Caco-2 (cell line): ENCODE measurements at regions of chr10 and their contacts with region 1.

Region 1: DNA sequence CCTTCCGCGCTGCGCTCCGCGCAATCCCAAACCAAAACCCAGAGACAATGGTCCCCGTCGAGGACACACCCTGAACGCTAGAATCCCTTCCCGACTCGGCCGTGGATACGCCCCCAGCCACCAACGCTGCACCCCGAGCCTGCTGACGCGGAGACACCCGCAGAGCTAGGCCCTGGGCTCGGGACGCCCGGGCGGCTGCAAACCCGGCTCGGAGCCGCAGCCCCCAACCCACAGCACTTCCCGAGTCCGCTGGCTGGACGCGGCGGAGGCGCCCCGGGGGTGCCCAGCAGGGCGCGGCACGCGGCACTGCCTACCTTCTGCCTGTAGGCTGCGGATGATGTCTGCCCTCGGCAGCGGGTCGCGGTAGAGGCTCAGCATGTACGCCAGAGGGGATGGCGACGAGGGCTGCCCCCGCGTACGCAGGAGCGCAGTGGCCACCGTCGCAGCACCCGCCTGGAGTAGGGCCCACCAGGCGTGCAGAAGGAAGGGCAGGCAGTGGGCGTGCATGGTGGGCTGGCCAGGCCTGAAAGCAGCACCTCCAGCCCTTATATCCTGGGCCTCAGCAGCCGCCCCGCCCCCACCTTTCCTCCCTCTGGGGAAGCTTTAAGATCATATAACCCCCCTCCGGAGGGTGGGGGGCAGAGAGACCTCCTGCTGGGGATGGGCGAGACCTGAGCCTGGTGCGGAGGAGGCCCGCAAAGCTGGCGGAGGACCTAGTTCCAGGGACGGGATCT is at the start of gene NODAL:
- DNase-seq: no peak
- H3K4me3 ChIP-seq: no peak within 1 kb of the TSS
- H3K4me3 Mint-ChIP-seq: peak within 1 kb of the TSS; percentile 12
- H3K27ac Mint-ChIP-seq: peak within 1 kb of the TSS; percentile 74
- H3K4me1 ChIP-seq: peaks cover 48% of the 10 kb centered on the region
- H3K4me1 Mint-ChIP-seq: peaks cover 34% of the 10 kb centered on the region
- H3K27me3 ChIP-seq: no peaks in the 10 kb centered on the region
- H3K27me3 Mint-ChIP-seq: no peaks in the 10 kb centered on the region
- CTCF ChIP-seq: no peak
- total RNA-seq, gene NODAL: 0.59 and 1.3 TPM in 2 replicates

Region 2: GRCh38 chr10:70348228-70348850 is 93.0 kb before region 1 on chr10:
- CTCF ChIA-PET with region 1: no interaction called
- POLR2A ChIA-PET with region 1: no interaction called
- intact Hi-C with region 1: no loop called
- DNase-seq: peak in 1 of 2 experiments; percentile 68
- H3K4me3 ChIP-seq: no peak overlapping the region
- H3K4me3 Mint-ChIP-seq: no peak overlapping the region
- H3K27ac Mint-ChIP-seq: no peak overlapping the region
- H3K4me1 ChIP-seq: peaks cover 33% of the 10 kb centered on the region
- H3K4me1 Mint-ChIP-seq: peaks cover 18% of the 10 kb centered on the region
- H3K27me3 ChIP-seq: no peaks in the 10 kb centered on the region
- H3K27me3 Mint-ChIP-seq: no peaks in the 10 kb centered on the region
- CTCF ChIP-seq: peak; percentile 69 to 70

Region 3: GRCh38 chr10:70425096-70425495 is 16.2 kb before region 1 on chr10:
- CTCF ChIA-PET with region 1: interaction called, 17 read pairs
- POLR2A ChIA-PET with region 1: interaction called, 5 read pairs
- intact Hi-C with region 1: loop called (anchors 1 kb)
- DNase-seq: peak; percentile 73 to 78
- H3K4me3 ChIP-seq: no peak overlapping the region
- H3K4me3 Mint-ChIP-seq: peak overlapping the region; percentile 51
- H3K27ac Mint-ChIP-seq: peak overlapping the region; percentile 88
- H3K4me1 ChIP-seq: peaks cover 65% of the 10 kb centered on the region
- H3K4me1 Mint-ChIP-seq: peaks cover 49% of the 10 kb centered on the region
- H3K27me3 ChIP-seq: no peaks in the 10 kb centered on the region
- H3K27me3 Mint-ChIP-seq: no peaks in the 10 kb centered on the region
- CTCF ChIP-seq: no peak

Region 4: DNA sequence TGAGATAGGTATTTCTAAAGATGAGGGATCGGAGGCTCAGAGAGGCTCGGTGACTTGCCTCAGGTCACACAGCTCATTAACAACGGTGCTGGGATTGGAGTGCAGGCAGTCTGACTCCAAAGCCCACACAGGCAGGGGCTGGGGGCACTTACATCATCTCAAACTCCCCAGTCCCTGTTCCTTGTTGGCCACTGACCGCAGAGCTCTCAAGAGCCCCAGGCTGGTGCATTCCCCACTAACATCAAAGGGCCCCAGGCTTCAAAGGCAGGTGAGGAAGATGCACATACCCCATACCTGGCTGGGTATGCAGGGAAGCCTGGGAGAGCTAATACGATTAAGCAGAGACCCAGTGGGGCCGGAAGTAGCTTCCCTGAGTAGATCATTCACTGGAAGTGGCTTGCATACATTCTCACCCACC is 13.9 kb after region 1 on chr10:
- CTCF ChIA-PET with region 1: interaction called, 6 read pairs
- POLR2A ChIA-PET with region 1: interaction called, 7 read pairs
- intact Hi-C with region 1: loop called (anchors 1 kb)
- DNase-seq: peak; percentile 84 to 89
- H3K4me3 ChIP-seq: no peak overlapping the region
- H3K4me3 Mint-ChIP-seq: no peak overlapping the region
- H3K27ac Mint-ChIP-seq: peak overlapping the region; percentile 7
- H3K4me1 ChIP-seq: peaks cover 14% of the 10 kb centered on the region
- H3K4me1 Mint-ChIP-seq: peaks cover 28% of the 10 kb centered on the region
- H3K27me3 ChIP-seq: no peaks in the 10 kb centered on the region
- H3K27me3 Mint-ChIP-seq: no peaks in the 10 kb centered on the region
- CTCF ChIP-seq: no peak

Region 5: DNA sequence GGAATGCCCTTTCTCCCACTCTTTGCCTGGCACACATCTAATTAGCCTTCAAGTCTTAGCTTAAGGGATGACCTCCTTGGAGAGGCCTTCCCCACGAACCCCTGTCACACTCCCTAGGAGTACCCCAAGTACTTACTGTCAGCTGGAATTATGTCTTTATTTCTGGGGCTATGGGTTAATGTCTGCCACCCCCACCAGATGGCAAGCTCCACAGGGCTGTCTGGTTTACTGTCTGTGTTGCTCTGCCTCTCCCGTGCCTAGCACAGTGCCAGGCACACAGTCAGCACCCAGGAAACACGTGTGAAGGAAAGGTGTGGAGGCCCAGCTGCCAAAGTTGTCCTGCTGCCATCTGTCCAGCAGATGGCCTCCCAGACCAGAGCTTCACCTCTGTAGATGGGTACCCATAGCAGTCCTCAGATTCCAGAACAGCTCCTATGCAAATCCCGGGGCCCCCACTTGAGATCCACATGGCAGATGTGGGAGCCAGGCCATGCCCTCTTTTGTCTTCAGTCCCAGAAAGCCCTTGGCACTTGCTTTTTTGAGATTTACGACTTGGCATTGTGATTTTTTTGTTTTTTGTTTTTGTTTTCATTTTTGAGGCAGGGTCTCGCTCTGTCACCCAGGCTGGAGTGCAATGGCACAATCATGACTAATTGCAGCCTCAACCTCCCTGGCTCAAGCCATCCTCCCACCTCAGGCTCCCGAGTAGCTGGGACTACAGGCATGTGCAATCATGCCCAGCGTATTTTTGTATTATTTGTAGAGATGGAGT is 20.1 kb after region 1 on chr10:
- CTCF ChIA-PET with region 1: interaction called, 15 read pairs
- POLR2A ChIA-PET with region 1: no interaction called
- intact Hi-C with region 1: no loop called
- DNase-seq: peak; percentile 76 to 81
- H3K4me3 ChIP-seq: no peak overlapping the region
- H3K4me3 Mint-ChIP-seq: no peak overlapping the region
- H3K27ac Mint-ChIP-seq: no peak overlapping the region
- H3K4me1 ChIP-seq: no peaks in the 10 kb centered on the region; the same call in 1 of the 2 replicates
- H3K4me1 Mint-ChIP-seq: peaks cover 14% of the 10 kb centered on the region
- H3K27me3 ChIP-seq: no peaks in the 10 kb centered on the region
- H3K27me3 Mint-ChIP-seq: no peaks in the 10 kb centered on the region
- CTCF ChIP-seq: peak; percentile 97 to 99

Region 6: GRCh38 chr10:70508912-70509756 is 67.8 kb after region 1 on chr10:
- CTCF ChIA-PET with region 1: no interaction called
- POLR2A ChIA-PET with region 1: no interaction called
- intact Hi-C with region 1: no loop called
- DNase-seq: no peak
- H3K4me3 ChIP-seq: no peak overlapping the region
- H3K4me3 Mint-ChIP-seq: no peak overlapping the region
- H3K27ac Mint-ChIP-seq: no peak overlapping the region
- H3K4me1 ChIP-seq: peaks cover 5% of the 10 kb centered on the region
- H3K4me1 Mint-ChIP-seq: peaks cover 12% of the 10 kb centered on the region
- H3K27me3 ChIP-seq: no peaks in the 10 kb centered on the region
- H3K27me3 Mint-ChIP-seq: no peaks in the 10 kb centered on the region
- CTCF ChIP-seq: no peak